Activated CD8-positive, alpha-beta memory T cell treated with anti-CD3 and anti-CD28 coated beads, Interleukin-2, amount 10 ng/mL, durations not matched to agents 7 days and 5 days (primary cell): ENCODE measurements at regions of chr19 and their contacts with region 1.

Region 1: DNA sequence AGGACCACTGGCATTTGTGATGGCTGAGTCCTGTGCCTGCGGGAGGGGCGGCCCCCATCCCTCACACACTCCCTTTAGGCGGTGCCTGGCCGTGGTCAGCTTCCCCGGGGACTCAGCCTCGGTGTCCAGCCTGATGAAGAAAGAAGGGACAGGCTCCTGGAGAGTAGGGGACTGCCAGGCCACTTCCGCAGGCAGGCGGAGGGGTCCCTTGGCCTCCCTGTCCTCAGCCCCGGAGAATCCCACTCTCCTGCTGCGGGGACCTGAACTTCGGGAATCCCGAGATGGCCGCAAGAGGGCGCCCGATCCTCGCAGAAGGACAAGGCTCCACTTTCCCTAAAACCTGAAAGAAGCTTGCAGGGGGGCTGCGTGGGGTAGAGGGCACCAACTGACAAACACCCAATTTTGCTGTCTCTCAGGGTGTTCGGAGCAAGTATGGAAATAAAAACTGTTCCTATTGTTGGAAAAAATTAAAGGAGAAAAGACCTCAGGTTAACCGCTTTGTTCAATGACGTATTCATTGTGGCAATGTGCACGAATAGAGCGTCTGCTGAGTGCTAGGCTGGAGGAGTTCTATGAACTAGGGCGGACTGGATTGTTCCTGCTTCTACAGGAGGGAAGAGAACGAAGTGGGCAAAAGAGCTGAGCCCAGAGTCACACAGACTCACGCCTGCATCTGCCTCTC is 297.3 kb downstream of the ZNF536 start:
- DNase-seq: peak; percentile 46
- ATAC-seq: no peak
- H3K4me3 Mint-ChIP-seq: no peak overlapping the region
- H3K27ac Mint-ChIP-seq: no peak overlapping the region
- H3K4me1 Mint-ChIP-seq: no peaks in the 10 kb centered on the region
- H3K27me3 Mint-ChIP-seq: no peaks in the 10 kb centered on the region

Region 2: DNA sequence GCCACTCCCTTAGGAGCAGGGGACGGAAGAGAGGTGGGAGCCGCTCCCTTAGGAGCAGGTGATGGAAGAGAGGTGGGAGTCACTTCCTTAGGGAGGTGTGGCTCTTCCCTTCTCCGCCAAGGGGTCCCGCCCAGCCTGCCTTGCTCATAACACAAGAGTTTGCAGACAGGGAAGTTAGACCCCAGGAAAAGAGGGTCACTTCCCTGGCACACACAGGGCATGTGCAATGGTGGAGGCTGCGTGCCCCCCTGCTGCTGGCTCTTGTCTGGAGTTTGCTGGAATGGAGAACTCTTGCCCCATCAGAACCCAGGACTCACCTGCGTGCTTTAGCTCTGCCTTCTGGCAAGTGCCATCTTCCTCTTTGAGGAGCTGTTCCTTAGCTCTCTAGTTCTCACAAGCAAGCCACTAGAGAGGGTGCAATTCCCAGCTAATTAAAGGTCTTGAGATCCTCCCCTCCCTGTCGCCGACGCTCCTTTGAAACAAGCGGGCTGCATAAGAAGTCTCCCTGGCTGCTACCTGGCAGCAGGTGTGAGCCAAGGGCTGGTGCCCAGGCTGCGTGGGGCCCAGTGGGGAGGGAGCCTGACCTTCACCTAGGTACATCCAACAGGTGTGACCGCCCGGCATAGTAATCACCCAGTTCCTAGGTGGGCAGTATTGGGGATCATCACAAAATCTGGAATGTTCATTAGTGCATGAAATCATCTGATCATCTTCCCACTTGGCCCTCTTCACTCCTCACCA is 15.7 kb before region 1 on chr19:
- CTCF ChIA-PET with region 1: interaction called, 12 read pairs
- DNase-seq: no peak
- ATAC-seq: no peak
- H3K4me3 Mint-ChIP-seq: no peak overlapping the region
- H3K27ac Mint-ChIP-seq: no peak overlapping the region
- H3K4me1 Mint-ChIP-seq: no peaks in the 10 kb centered on the region
- H3K27me3 Mint-ChIP-seq: peaks cover 9% of the 10 kb centered on the region